ENCODE measurements at regions of chr2 and their contacts with region 1.

Region 1: DNA sequence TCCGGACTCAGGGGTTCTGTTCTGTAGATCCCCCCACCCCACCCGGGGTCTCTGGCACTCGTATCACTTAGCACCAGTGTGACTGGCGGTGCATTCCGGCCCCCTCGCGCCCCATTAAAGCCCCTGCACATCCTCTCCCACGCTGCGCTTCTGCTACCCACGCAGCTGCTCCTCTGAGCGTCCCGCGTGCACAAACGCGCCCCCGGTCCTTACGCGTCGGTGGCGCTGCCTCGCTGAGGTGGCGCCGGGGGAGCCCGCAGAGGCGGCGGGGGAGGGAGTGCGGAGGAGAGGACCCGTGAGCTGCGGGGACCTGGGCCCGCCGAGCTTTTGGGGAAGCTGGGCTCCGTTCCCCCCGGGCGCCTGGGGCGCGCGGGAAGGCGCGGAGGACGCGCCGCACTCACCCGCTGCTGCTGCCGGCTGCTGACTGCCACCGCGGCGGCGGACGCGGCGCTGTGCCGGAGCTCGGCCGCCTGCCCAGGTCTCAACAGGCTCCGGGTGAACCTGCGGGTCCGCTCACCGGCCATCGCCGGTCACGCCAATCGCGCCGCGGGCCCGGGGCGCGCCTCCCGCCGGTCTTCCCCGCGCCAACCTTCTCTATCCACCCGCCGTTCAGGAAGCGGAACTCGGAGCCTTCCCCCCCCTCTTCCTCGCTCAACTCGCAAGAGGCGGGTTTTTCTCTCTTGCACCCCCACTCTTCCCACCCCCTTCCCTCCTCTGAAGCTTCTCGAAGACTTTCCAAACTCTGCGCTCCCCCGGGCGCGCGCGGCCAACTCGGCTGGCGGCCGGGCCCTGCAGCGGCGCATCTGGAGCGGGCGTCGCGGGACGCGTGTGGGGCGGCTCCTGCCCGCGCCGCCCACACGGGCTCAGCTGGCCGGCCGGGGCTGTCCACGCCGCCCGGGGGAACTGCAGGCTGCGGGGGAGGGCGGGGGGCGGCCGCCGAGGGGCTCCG is at the start of gene DOCK10:
- DNase-seq: peak; percentile 15 to 73 (median 50)
- ATAC-seq: peak; percentile 65 to 73 (median 71)
- H3K4me3 ChIP-seq: peak within 1 kb of the TSS; percentile 73 to 83
- H3K4me3 Mint-ChIP-seq: peak within 1 kb of the TSS; percentile 92 to 100 (median 99)
- H3K27ac ChIP-seq: peak within 1 kb of the TSS; percentile 92
- H3K27ac Mint-ChIP-seq: peak within 1 kb of the TSS; percentile 98 to 99
- H3K4me1 ChIP-seq: peaks cover 19 to 35% of the 10 kb centered on the region in 2 experiments
- H3K4me1 Mint-ChIP-seq: peaks cover 51 to 54% (median 54%) of the 10 kb centered on the region in 3 donors
- H3K27me3 ChIP-seq: no peaks in the 10 kb centered on the region
- H3K27me3 Mint-ChIP-seq: no peaks in the 10 kb centered on the region
- total RNA-seq, gene DOCK10: 206 to 266 (median 235) TPM

Region 2: DNA sequence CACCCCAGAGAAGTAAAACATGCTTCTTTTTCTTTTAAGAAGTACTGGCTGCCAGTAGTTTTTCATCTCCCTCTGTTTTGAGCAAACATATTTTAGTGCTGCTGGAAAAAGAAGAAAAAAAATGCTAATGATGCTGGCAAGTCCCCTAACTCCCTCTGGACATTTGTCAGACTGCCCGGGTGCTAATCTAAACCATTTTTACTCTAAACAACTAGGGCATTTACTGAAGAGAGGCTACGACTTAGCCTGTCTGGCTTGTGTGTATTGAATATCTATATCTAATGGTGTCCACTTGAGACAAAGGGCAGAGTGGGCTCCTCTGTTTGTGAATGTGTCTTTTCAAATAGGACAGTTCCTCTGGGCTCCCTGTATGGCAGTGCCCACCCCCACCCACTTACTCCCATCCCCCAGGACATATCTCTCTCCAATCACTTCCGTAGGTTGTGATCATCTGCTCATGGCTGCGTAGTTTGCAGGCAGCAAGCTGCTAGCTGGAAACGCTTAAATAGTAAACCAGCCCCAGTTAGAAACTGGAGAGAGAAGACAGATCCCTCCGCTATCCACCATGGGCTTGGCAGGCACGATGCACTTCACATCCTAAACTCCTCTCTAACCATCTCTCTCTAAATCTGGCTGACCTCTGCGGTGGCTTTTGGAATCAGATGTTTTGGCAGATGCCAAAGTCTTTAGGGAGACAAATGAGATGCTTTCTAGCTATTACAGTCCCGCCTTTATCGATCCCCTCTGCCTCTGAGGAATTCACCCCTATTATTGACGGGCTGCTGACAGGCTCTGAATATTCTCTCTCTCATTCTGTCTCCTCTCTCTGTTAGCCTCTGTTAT is 58.2 kb before region 1 on chr2:
- CTCF ChIA-PET with region 1: no interaction called
- POLR2A ChIA-PET with region 1: interaction called, 4 to 17 read pairs
- DNase-seq: no peak
- ATAC-seq: peak in 1 of 4 experiments; percentile 7
- H3K4me3 ChIP-seq: no peak overlapping the region
- H3K4me3 Mint-ChIP-seq: peak overlapping the region; percentile 34 to 62 (median 42)
- H3K27ac ChIP-seq: peak overlapping the region; percentile 75
- H3K27ac Mint-ChIP-seq: peak overlapping the region; percentile 89 to 94
- H3K4me1 ChIP-seq: peaks cover 51 to 60% of the 10 kb centered on the region in 2 experiments
- H3K4me1 Mint-ChIP-seq: peaks cover 84 to 86% (median 85%) of the 10 kb centered on the region in 3 donors
- H3K27me3 ChIP-seq: no peaks in the 10 kb centered on the region
- H3K27me3 Mint-ChIP-seq: no peaks in the 10 kb centered on the region

Region 3: GRCh38 chr2:225022188-225022587 is 19.9 kb before region 1 on chr2:
- CTCF ChIA-PET with region 1: no interaction called
- POLR2A ChIA-PET with region 1: interaction called in 1 of 2 experiments, 10 read pairs
- DNase-seq: no peak
- ATAC-seq: no peak
- H3K4me3 ChIP-seq: no peak overlapping the region
- H3K4me3 Mint-ChIP-seq: peak overlapping the region in 1 of 3 donors; percentile 14
- H3K27ac ChIP-seq: no peak overlapping the region
- H3K27ac Mint-ChIP-seq: peak overlapping the region; percentile 17 to 74
- H3K4me1 ChIP-seq: peaks cover 21 to 39% of the 10 kb centered on the region in 2 experiments
- H3K4me1 Mint-ChIP-seq: peaks cover 86 to 90% (median 89%) of the 10 kb centered on the region in 3 donors
- H3K27me3 ChIP-seq: no peaks in the 10 kb centered on the region
- H3K27me3 Mint-ChIP-seq: no peaks in the 10 kb centered on the region

Region 4: GRCh38 chr2:225030203-225030602 is 11.9 kb before region 1 on chr2:
- CTCF ChIA-PET with region 1: interaction called in 1 of 2 experiments, 3 read pairs
- POLR2A ChIA-PET with region 1: interaction called in 1 of 2 experiments, 11 read pairs
- DNase-seq: peak in 7 of 35 experiments; percentile 3 to 27 (median 13)
- ATAC-seq: peak; percentile 28 to 46 (median 34)
- H3K4me3 ChIP-seq: no peak overlapping the region
- H3K4me3 Mint-ChIP-seq: peak overlapping the region; percentile 34 to 50 (median 41)
- H3K27ac ChIP-seq: no peak overlapping the region
- H3K27ac Mint-ChIP-seq: peak overlapping the region; percentile 79 to 80
- H3K4me1 ChIP-seq: peaks cover 47 to 51% of the 10 kb centered on the region in 2 experiments
- H3K4me1 Mint-ChIP-seq: peaks cover 81 to 86% (median 86%) of the 10 kb centered on the region in 3 donors
- H3K27me3 ChIP-seq: no peaks in the 10 kb centered on the region
- H3K27me3 Mint-ChIP-seq: no peaks in the 10 kb centered on the region

Region 5: DNA sequence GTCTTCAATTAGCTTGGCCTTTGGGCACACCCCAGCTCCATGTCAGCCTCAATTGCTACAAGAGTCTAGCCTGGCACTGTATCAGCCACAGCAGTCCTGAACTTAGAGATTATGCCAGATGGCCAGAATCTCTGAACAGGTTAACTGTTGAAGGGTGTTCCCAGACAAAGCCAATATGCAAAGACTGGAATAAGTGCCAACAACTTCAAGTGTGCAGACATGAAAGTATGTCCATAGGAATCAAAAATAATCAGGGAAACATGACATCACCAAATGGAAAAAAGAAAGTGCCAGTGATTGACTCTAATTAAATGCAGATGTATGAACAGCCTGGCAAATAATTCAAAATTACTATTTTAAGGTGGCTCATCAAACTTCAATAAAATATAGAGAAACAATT is 98.6 kb after region 1 on chr2:
- CTCF ChIA-PET with region 1: no interaction called
- POLR2A ChIA-PET with region 1: interaction called in 1 of 2 experiments, 20 read pairs
- DNase-seq: no peak
- ATAC-seq: no peak
- H3K4me3 ChIP-seq: no peak overlapping the region
- H3K4me3 Mint-ChIP-seq: no peak overlapping the region
- H3K27ac ChIP-seq: no peak overlapping the region
- H3K27ac Mint-ChIP-seq: no peak overlapping the region
- H3K4me1 ChIP-seq: no peaks in the 10 kb centered on the region
- H3K4me1 Mint-ChIP-seq: no peaks in the 10 kb centered on the region
- H3K27me3 ChIP-seq: no peaks in the 10 kb centered on the region
- H3K27me3 Mint-ChIP-seq: no peaks in the 10 kb centered on the region

Measured in T-cell (primary cell).